ENCODE measurements at regions of chr6 and their contacts with region 1.

Region 1: GRCh38 chr6:41334482-41335040 is 847 bp upstream of the NCR2 start:
- DNase-seq: no peak
- H3K4me3 Mint-ChIP-seq: no peak overlapping the region
- H3K27ac Mint-ChIP-seq: peak overlapping the region; percentile 54
- H3K4me1 Mint-ChIP-seq: peaks cover 40% of the 10 kb centered on the region
- H3K27me3 Mint-ChIP-seq: no peaks in the 10 kb centered on the region

Region 2: GRCh38 chr6:41318654-41319565 is 15.7 kb before region 1 on chr6:
- CTCF ChIA-PET with region 1: interaction called, 30 read pairs
- POLR2A ChIA-PET with region 1: no interaction called
- DNase-seq: peak; percentile 86
- H3K4me3 Mint-ChIP-seq: peak overlapping the region; percentile 12
- H3K27ac Mint-ChIP-seq: peak overlapping the region; percentile 50
- H3K4me1 Mint-ChIP-seq: peaks cover 21% of the 10 kb centered on the region
- H3K27me3 Mint-ChIP-seq: peaks cover 31% of the 10 kb centered on the region

Region 3: DNA sequence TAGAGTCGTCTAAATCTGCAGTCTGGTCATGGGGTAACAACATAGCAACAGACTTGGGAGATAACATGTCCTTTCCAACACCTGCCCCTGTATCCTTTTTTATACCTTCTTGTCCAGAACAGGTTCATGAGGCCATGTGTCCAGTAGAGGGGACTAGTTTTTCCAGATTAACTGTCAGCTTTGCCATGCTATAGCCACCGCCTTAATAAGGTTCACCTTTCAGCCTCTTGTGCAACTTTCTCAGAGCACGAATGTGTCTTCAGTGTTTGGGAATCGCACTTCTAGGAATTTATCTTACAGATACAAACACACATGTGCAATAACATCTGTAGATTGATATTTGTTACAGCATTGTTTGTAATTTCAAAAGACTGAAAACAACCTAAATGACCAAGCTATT is 22.2 kb after region 1 on chr6:
- CTCF ChIA-PET with region 1: no interaction called
- POLR2A ChIA-PET with region 1: no interaction called
- DNase-seq: no peak
- H3K4me3 Mint-ChIP-seq: no peak overlapping the region
- H3K27ac Mint-ChIP-seq: no peak overlapping the region
- H3K4me1 Mint-ChIP-seq: no peaks in the 10 kb centered on the region
- H3K27me3 Mint-ChIP-seq: peaks cover 28% of the 10 kb centered on the region

Region 4: DNA sequence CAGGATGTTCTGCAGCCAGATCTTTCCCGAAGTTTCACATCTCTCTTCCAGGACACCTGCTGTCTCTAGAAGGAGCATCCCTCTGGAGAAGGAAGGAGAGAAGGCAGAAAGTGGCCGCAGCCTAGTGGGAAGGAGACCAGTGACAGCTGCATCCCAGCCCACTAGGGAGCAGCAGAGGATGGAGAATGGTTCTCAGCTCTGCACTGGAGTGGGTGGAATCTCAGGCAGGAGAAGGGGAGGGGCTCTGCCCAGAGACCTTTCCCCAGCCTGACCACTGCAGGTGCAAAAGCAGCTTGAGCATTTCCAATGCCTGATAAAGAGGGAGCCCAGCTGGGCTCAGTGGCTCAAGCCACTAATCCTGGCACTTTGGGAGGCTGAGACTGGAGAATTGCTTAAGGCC is 33.1 kb after region 1 on chr6:
- CTCF ChIA-PET with region 1: interaction called, 13 read pairs
- POLR2A ChIA-PET with region 1: no interaction called
- DNase-seq: no peak
- H3K4me3 Mint-ChIP-seq: no peak overlapping the region
- H3K27ac Mint-ChIP-seq: no peak overlapping the region
- H3K4me1 Mint-ChIP-seq: peaks cover 18% of the 10 kb centered on the region
- H3K27me3 Mint-ChIP-seq: peaks cover 64% of the 10 kb centered on the region

Region 5: GRCh38 chr6:41494212-41495110 is 159.9 kb after region 1 on chr6:
- CTCF ChIA-PET with region 1: no interaction called
- POLR2A ChIA-PET with region 1: no interaction called
- DNase-seq: no peak
- H3K4me3 Mint-ChIP-seq: no peak overlapping the region
- H3K27ac Mint-ChIP-seq: no peak overlapping the region
- H3K4me1 Mint-ChIP-seq: no peaks in the 10 kb centered on the region
- H3K27me3 Mint-ChIP-seq: peaks cover 56% of the 10 kb centered on the region

Measured in activated CD4-positive, alpha-beta T cell treated with anti-CD3 and anti-CD28 coated beads, Interleukin-2, amount 10 ng/mL, durations not matched to agents 7 days and 5 days (primary cell).